ENCODE measurements at regions of chrX and their contacts with region 1.

Region 1: GRCh38 chrX:50691820-50692219 is 122.2 kb downstream of the SHROOM4 start:
- DNase-seq: no peak
- ATAC-seq: peak; percentile 41 to 60

Region 2: GRCh38 chrX:50161127-50161526 is 530.7 kb before region 1 on chrX:
- intact Hi-C with region 1: no loop called
- DNase-seq: no peak
- ATAC-seq: no peak

Region 3: DNA sequence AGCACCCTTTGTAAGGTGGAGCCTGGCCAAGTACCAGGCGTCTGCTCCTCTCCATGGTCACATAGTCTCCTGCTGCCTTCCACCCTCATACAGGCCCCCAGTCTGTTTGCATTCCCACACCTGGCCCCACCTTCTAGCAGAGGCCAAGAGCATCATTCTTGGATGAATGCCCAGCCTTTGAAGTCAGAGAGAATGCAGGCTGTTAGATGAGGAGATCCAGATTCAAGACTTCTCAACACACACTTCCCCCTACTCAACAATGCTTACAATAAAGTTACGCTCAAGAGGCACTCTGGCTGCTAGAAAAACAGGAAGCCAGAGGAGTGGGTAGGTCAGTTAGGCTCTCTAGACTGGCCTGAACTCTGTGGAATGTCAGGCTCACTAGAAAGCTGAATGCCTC is 78.9 kb after region 1 on chrX:
- intact Hi-C with region 1: no loop called
- DNase-seq: no peak
- ATAC-seq: no peak

Region 4: DNA sequence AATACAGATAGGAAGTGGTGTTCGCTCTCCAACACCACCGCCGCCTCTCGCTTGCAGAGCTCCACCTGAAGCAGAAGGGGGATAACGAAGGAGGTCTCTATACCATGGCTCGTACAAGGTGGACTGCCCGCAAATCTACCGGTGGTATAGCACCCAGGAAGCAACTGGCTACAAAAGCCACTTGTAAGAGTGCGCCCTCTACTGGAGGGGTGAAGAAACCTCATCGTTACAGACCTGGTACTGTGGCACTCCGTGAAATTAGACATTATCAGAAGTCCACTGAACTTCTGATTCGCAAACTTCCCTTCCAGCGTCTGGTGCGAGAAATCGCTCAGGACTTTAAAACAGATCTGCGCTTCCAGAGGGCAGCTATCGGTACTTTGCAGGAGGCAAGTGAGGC is 213.5 kb after region 1 on chrX:
- intact Hi-C with region 1: loop called (anchors 10 kb)
- DNase-seq: no peak
- ATAC-seq: no peak

Region 5: GRCh38 chrX:50913520-50913919 is 221.7 kb after region 1 on chrX:
- intact Hi-C with region 1: loop called (anchors 10 kb)
- DNase-seq: no peak
- ATAC-seq: peak in 1 of 2 donors; percentile 53

Region 6: DNA sequence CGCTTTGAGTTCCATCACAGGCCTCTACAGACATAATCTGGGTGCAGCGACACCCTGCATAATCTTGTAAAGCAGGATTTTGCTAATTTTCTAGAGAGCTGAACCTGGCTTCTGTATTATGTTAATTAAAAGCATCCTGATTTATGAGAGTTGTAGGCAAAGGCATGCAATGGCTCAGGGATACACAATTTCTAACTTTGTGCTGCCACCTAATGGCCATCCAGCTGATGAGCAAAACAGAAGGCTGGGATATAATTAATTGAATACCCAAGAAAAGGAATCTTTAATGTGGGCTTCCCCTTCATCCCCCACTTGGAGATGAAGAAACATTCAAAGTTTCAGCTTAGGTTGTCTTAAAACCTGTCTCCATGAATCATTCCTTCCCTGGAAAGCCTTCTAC is 296.8 kb after region 1 on chrX:
- intact Hi-C with region 1: loop called in 1 of 2 experiments (anchors 5 kb)
- DNase-seq: no peak
- ATAC-seq: no peak

Measured in left cardiac atrium (tissue), 4 donors.